ENCODE measurements at regions of chr4 and their contacts with region 1.

Region 1: GRCh38 chr4:177047070-177047850 is 254.5 kb upstream of the VEGFC start:
- DNase-seq: no peak
- ATAC-seq: peak; percentile 79
- H3K4me3 Mint-ChIP-seq: no peak overlapping the region
- H3K27ac Mint-ChIP-seq: no peak overlapping the region
- H3K4me1 Mint-ChIP-seq: no peaks in the 10 kb centered on the region
- H3K27me3 Mint-ChIP-seq: no peaks in the 10 kb centered on the region
- CTCF ChIP-seq: no peak

Region 2: DNA sequence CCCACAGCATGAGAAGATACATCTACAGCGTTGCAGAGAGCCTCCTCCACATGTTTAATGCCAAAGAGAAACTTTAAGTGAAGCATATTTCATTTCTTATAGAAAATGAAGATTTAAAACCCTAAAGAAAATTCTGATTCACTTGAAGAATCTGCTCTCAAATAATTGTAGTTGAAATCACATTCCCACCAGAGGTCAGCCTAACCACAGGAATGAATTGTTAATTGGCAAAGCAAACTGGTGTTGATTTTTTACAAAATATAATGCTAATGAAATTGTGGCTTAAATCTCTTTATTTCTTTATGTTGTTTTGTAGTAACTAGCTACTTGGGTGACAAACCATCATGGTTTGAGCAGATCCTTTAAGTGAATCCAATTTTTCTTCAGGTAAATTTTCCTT is 1012.8 kb before region 1 on chr4:
- CTCF ChIA-PET with region 1: interaction called, 18 read pairs
- POLR2A ChIA-PET with region 1: no interaction called
- intact Hi-C with region 1: no loop called
- DNase-seq: no peak
- ATAC-seq: no peak
- H3K4me3 Mint-ChIP-seq: no peak overlapping the region
- H3K27ac Mint-ChIP-seq: no peak overlapping the region
- H3K4me1 Mint-ChIP-seq: peaks cover 4% of the 10 kb centered on the region
- H3K27me3 Mint-ChIP-seq: no peaks in the 10 kb centered on the region
- CTCF ChIP-seq: no peak

Region 3: GRCh38 chr4:176150356-176150682 is 896.9 kb before region 1 on chr4:
- CTCF ChIA-PET with region 1: no interaction called
- POLR2A ChIA-PET with region 1: no interaction called
- intact Hi-C with region 1: loop called (anchors 5 kb)
- DNase-seq: no peak
- ATAC-seq: no peak
- H3K4me3 Mint-ChIP-seq: no peak overlapping the region
- H3K27ac Mint-ChIP-seq: no peak overlapping the region
- H3K4me1 Mint-ChIP-seq: no peaks in the 10 kb centered on the region
- H3K27me3 Mint-ChIP-seq: no peaks in the 10 kb centered on the region
- CTCF ChIP-seq: no peak

Region 4: GRCh38 chr4:176376032-176376614 is 671.1 kb before region 1 on chr4:
- CTCF ChIA-PET with region 1: interaction called, 4 read pairs
- POLR2A ChIA-PET with region 1: no interaction called
- intact Hi-C with region 1: loop called (anchors 1 kb)
- DNase-seq: no peak
- ATAC-seq: no peak
- H3K4me3 Mint-ChIP-seq: no peak overlapping the region
- H3K27ac Mint-ChIP-seq: no peak overlapping the region
- H3K4me1 Mint-ChIP-seq: no peaks in the 10 kb centered on the region
- H3K27me3 Mint-ChIP-seq: peaks cover 5% of the 10 kb centered on the region
- CTCF ChIP-seq: no peak

Region 5: DNA sequence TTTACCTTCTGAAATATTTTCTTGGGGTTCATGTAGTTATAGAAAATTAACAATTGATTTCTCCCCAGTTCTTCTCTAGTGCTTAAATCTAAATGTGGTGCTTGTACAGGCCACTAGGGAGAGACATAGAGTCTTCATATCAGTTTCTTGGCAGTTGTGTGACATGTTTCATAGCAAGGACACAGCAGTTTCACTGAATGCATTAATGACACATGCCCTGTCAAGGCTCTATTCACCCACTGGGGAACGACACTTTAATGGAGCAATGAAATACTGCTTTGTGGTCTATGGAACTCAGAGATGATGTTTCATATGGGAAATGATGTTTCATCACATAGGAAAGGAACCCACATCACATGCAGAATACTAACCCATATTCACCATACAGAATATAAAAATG is 257.3 kb before region 1 on chr4:
- CTCF ChIA-PET with region 1: no interaction called
- POLR2A ChIA-PET with region 1: no interaction called
- intact Hi-C with region 1: loop called (anchors 1 kb)
- DNase-seq: no peak
- ATAC-seq: peak; percentile 25
- H3K4me3 Mint-ChIP-seq: no peak overlapping the region
- H3K27ac Mint-ChIP-seq: no peak overlapping the region
- H3K4me1 Mint-ChIP-seq: peaks cover 12% of the 10 kb centered on the region
- H3K27me3 Mint-ChIP-seq: peaks cover 34% of the 10 kb centered on the region
- CTCF ChIP-seq: no peak

Region 6: DNA sequence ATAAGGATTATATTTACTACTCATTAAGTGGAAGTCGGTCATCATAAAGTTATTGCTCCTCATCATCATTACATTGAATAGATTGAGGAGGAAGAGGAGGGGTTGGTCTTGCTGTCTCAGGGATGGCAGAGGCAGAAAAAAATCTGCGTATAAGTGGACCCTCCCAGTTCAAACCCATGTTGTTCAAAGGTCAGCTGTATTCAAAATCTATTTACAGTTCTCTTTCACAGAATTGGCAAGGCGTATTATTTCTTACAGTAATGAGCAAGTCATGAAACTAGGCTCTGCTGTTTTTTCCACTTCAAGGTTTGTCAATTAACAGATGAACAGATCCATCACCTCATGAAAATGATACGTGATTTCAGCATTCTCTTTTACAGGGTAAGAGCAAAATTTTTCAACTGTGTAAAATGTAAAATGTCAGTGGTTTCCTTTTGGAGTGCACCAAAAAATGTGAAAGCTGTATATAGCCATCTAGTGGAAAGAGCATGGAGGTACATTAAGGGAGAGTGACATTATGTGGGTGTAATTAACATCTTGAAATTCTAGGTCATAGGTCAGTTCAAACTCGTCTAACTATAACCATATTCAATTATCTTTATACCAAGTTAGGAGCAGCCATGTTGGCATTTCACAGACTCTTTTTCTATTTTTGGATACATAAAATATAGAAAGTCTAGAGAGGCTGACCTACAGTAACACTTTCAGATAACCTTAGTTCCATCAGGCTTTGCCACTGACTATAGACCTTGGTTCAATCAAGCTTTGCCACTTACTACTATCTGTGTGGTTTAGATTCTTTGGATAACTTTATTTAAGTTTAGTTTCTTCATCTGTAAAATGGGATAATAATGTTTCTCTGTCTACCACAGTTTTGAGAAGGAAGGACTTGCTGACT is 292.5 kb after region 1 on chr4:
- CTCF ChIA-PET with region 1: interaction called, 4 read pairs
- POLR2A ChIA-PET with region 1: no interaction called
- intact Hi-C with region 1: loop called (anchors 2 kb)
- DNase-seq: no peak
- ATAC-seq: peak; percentile 66
- H3K4me3 Mint-ChIP-seq: no peak overlapping the region
- H3K27ac Mint-ChIP-seq: no peak overlapping the region
- H3K4me1 Mint-ChIP-seq: peaks cover 4% of the 10 kb centered on the region
- H3K27me3 Mint-ChIP-seq: no peaks in the 10 kb centered on the region
- CTCF ChIP-seq: no peak

Measured in activated B cell treated with CpG ODN at 0.5 μM for 24 hours (primary cell).